Common myeloid progenitor, CD34-positive (primary cell): ENCODE measurements at regions of chr3 and their contacts with region 1.

Region 1: DNA sequence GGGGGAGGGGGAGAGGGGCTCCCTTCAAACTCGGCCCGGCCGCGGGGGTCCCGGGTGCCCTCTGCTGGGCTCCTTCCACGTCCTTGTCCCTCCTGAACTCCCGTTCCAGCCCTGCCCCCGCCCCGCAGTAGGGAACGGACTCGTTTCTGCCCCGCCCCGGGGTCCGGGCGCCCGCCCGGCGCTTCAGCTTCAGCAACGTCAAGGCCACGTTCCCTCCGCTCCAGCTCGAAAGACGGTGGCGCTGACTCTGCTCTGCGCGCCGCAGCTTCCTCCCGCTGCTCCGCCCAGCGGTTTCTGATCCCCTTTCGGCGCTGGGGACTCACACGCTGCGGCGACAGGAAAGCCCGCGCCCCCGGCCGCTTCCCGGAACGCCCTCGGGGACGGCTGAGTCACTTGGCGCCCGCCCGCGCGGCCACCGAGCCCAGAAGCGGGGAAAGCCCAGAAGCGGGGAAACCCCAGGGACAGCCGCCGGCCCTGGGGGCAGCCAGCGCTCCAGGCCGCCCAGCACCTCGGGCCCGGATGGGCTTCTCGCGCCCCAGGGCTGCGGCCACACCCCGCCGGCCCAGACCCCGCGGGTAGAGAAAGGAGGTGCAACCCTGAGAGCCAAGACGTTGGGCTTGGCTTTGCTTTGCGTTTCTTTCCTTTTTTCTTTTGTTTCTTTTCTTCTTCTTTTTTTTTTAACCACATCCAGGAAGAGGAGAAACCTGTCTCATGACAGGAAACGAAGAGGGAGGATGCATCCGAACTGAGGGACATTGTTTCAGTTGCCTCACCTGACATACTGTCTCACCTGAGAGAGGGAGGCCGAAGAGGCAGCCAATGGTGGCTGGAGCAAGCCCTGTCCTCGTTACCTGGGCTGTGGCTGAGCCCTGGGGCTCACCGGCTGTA is 28.9 kb downstream of the ARHGAP31 start:
- DNase-seq: peak; percentile 96 to 99 (median 98)
- H3K4me3 ChIP-seq: peak overlapping the region; percentile 51 to 90 (median 69)
- H3K27ac ChIP-seq: peak overlapping the region; percentile 88 to 89
- H3K4me1 ChIP-seq: peaks cover 1 to 37% (median 19%) of the 10 kb centered on the region in 4 experiments
- H3K27me3 ChIP-seq: no peaks in the 10 kb centered on the region

Region 2: GRCh38 chr3:119184796-119185570 is 138.1 kb before region 1 on chr3:
- CTCF ChIA-PET with region 1: no interaction called
- POLR2A ChIA-PET with region 1: no interaction called
- DNase-seq: no peak
- H3K4me3 ChIP-seq: no peak overlapping the region
- H3K27ac ChIP-seq: no peak overlapping the region
- H3K4me1 ChIP-seq: no peaks in the 10 kb centered on the region
- H3K27me3 ChIP-seq: peaks cover 0 to 2% (median 0%) of the 10 kb centered on the region in 5 experiments

Region 3: DNA sequence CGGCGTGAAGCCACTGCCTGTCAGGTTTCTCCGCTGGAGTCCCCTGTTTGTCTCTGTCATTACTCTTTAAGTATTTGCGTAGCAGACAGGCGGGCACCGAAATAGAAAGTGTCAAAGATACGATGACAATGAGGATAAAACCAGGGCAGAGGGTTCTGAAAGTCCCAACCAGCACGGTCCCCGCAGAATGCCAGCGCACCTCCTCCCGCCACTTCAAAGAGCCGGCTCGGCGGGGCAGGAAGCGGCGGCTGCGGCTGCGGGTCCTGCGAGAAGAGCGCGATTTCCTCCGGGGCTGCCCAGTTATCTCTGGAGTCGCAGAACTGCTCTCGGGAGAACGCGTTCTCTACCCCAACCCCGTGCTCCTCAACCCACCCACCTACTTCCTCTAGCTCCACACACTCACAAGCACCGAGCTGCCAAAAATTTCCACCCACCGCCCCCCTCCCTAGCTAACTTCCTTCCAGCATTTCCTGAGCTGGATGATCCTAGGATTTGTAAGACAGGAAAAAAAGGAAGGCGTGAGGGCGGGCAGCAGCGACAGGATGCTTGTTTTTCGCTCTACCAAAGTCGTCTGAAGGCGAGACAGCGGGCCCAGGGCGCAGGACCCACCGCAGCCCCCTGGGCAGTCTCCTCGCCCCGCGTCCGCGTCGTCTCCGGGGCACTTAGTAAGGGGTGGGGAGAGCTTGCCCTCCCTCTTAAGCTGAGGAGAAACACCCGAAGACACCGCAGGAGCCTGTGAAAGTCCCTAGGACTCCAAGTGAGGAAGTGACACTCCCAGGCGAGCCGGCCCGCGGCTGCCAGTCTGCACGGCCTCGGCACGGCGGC is 29.0 kb before region 1 on chr3 and contains the start of gene ARHGAP31:
- CTCF ChIA-PET with region 1: interaction called, 15 read pairs
- POLR2A ChIA-PET with region 1: interaction called, 31 read pairs
- DNase-seq: peak; percentile 68 to 92 (median 90)
- H3K4me3 ChIP-seq: peak within 1 kb of the TSS; percentile 66 to 93 (median 73)
- H3K27ac ChIP-seq: peak within 1 kb of the TSS in 1 of 2 experiments; percentile 69
- H3K4me1 ChIP-seq: peaks cover 8 to 72% (median 45%) of the 10 kb centered on the region in 4 experiments
- H3K27me3 ChIP-seq: no peaks in the 10 kb centered on the region

Region 4: GRCh38 chr3:119759962-119760361 is 436.9 kb after region 1 on chr3:
- CTCF ChIA-PET with region 1: no interaction called
- POLR2A ChIA-PET with region 1: no interaction called
- DNase-seq: no peak
- H3K4me3 ChIP-seq: no peak overlapping the region
- H3K27ac ChIP-seq: no peak overlapping the region
- H3K4me1 ChIP-seq: no peaks in the 10 kb centered on the region
- H3K27me3 ChIP-seq: no peaks in the 10 kb centered on the region